Gastrocnemius medialis (tissue), 4 donors: ENCODE measurements at regions of chr21 and their contacts with region 1.

Region 1: GRCh38 chr21:37366482-37367316 is at the start of gene DYRK1A:
- DNase-seq: peak; percentile 99 to 100
- ATAC-seq: peak; percentile 78 to 82
- H3K4me3 ChIP-seq: peak within 1 kb of the TSS; percentile 83 to 97 (median 92)
- H3K27ac ChIP-seq: peak within 1 kb of the TSS; percentile 99 to 100 (median 100)
- H3K4me1 ChIP-seq: peaks cover 31 to 39% of the 10 kb centered on the region in 2 donors
- H3K27me3 ChIP-seq: no peaks in the 10 kb centered on the region
- CTCF ChIP-seq: peak in 1 of 5 experiments; percentile 16
- POLR2A ChIP-seq: peak; percentile 79 to 89
- total RNA-seq, gene DYRK1A: 81.0 to 115 (median 95.3) TPM

Region 2: DNA sequence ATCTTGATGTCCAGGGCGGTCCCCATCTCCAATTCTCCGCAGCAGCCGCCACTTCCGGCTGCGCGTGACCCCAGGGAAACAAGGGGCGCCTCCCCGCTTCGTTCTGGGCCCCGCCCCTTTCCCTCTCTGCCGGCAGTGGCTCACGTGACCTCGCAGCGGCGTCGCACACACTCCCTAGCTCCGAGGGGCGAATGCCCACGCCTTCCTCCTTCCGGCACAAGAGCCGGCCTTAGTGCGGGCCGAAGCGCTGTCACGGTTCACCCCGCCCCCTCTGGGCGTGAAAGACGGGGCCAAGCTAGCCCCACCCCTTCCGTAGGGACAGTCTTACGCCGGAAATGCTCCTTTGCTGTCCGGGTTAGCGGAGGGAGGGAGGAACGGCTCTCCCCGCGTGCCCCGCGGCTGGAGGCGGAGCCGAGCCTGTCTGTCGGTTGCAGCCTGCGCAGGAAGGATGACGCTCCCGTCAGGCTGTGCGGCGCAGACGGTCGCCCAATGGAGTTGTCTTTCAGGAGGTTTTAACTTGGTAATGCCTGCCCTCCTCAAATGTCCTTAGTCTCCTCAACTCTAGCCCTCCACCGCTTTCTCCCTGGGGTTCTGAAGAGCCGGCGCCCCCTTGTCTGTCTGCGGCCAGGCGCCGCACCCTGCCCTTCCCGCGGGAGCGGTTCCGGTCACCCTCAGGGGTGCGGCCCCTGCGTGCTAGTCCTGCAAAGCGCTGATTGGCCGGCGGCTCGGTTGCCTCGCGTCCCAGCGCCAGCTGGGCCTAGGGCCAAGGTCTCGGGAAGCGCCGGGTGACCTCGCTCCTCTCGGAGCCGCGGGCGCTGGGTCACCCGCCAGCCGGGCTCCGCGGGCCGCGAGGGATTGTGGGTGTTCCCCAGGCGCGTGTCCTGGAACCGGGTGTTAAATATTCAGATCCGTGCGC is 99.2 kb before region 1 on chr21 and contains the start of gene VPS26C:
- in situ Hi-C with region 1: loop called in 3 of 4 experiments (anchors 10 to 25 kb)
- intact Hi-C with region 1: loop called (anchors 1 kb)
- DNase-seq: peak; percentile 97 to 99
- ATAC-seq: peak; percentile 88 to 94
- H3K4me3 ChIP-seq: peak within 1 kb of the TSS; percentile 72 to 90 (median 84)
- H3K27ac ChIP-seq: peak within 1 kb of the TSS; percentile 89 to 97 (median 96)
- H3K4me1 ChIP-seq: peaks cover 37 to 41% of the 10 kb centered on the region in 2 donors
- H3K27me3 ChIP-seq: no peaks in the 10 kb centered on the region
- CTCF ChIP-seq: peak in 1 of 5 experiments; percentile 32
- POLR2A ChIP-seq: peak; percentile 88 to 92
- total RNA-seq, gene VPS26C: 57.6 to 82.7 (median 75.4) TPM

Region 3: GRCh38 chr21:37273911-37274690 is 92.6 kb before region 1 on chr21:
- in situ Hi-C with region 1: loop called in 3 of 4 experiments (anchors 10 to 25 kb)
- intact Hi-C with region 1: no loop called
- DNase-seq: no peak
- ATAC-seq: no peak
- H3K4me3 ChIP-seq: no peak overlapping the region
- H3K27ac ChIP-seq: no peak overlapping the region
- H3K4me1 ChIP-seq: no peaks in the 10 kb centered on the region
- H3K27me3 ChIP-seq: no peaks in the 10 kb centered on the region
- CTCF ChIP-seq: no peak
- POLR2A ChIP-seq: no peak

Region 4: DNA sequence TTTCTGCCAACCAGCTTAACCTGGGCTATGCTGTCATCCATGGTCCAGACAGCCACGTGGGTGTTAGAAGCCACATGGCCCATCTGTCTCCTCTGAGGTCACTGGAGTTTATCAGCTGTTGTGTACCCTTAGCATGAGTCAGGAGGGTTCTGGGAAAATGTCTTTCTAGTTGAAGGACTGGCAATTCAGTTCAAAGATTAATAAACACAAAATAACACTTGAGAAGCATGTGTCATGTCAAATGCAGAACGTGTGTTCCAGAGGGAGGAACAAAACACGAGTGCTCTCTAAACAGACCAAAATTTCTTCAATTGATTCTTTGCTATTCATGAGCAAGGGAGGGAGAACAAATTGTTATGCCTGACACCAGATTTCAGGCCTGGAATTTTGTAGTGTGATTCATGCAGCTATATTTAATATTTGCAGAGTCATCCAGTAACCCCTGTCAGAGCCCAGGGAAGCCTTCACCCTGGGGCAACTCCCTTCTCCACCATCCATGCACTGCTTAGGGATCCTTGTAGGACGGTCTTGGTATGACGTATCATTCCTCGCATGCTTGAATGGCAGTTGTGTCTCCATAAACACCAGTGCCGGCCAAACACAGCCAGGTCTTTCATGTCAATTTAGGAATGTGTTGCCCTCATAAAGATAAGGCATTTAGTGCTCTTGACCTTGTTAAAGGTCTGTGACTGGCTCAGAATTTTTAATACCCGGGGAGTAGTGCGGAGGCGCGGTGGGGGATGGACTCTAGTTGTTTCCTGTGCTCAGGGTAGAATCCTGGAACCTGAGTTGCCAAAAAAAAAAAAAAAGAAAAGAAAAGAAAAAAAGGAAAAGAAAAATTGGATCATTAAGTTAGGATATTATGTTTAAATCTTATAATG is 27.8 kb before region 1 on chr21:
- in situ Hi-C with region 1: no loop called
- intact Hi-C with region 1: loop called (anchors 1 kb)
- DNase-seq: peak; percentile 70 to 92
- ATAC-seq: peak; percentile 96 to 97
- H3K4me3 ChIP-seq: peak overlapping the region; percentile 17 to 40 (median 28)
- H3K27ac ChIP-seq: peak overlapping the region; percentile 85 to 92 (median 86)
- H3K4me1 ChIP-seq: peaks cover 10 to 21% of the 10 kb centered on the region in 2 donors
- H3K27me3 ChIP-seq: no peaks in the 10 kb centered on the region
- CTCF ChIP-seq: no peak
- POLR2A ChIP-seq: peak in 1 of 2 donors; percentile 12

Region 5: DNA sequence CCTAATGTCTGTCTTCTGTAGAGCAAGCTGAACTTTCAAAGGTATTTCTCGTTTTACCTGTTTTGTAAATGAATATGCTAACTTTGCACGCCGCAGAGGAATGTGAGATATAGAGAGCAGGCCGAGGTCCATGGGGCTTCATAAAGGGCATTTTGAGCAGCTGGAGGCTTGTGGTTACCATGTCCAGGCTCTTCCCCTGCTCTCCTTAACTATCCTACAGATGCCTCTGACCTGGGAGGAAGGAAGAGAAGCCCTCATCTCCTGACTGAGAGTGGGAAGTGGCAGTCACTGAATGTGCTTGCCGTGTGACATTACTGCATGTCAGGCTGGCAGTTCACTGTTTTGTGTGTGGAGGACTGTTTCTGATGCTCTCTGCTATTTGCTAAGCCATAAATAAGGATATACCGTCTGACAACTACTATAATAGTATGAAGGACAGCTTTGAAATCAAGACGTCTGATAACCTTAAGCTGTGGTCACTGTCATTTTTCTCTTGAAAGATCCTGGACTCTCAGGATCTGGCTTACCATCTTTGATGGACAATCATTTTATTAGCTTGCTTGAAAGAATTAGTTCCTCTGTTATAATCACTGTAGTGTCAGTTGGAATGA is 92.1 kb after region 1 on chr21:
- in situ Hi-C with region 1: no loop called
- intact Hi-C with region 1: loop called (anchors 5 kb)
- DNase-seq: no peak
- ATAC-seq: peak; percentile 8 to 51
- H3K4me3 ChIP-seq: peak overlapping the region in 2 of 4 donors; percentile 11 to 15
- H3K27ac ChIP-seq: peak overlapping the region; percentile 78 to 86 (median 80)
- H3K4me1 ChIP-seq: peaks cover 97 to 99% of the 10 kb centered on the region in 2 donors
- H3K27me3 ChIP-seq: no peaks in the 10 kb centered on the region
- CTCF ChIP-seq: no peak
- POLR2A ChIP-seq: no peak

Region 6: DNA sequence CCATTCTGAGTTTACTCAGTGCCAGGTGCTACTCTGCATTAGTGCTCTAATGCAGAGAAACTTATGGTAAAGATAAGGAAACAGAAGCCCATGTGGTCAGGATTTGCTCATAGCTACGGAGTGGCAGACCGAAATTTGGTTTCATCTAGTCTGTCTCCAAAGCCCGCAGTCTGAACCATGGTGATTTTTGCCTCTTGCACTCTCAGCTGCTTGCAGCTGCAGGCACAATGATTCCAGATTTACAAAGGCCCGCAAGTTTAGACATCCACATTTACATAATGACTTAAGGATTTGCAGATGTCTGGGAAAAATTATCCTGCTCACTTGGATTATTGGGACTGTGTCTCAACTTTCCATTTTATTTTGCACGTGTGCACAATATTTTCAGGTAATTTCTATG is 710.9 kb after region 1 on chr21:
- in situ Hi-C with region 1: no loop called
- intact Hi-C with region 1: no loop called
- DNase-seq: no peak
- ATAC-seq: no peak
- H3K4me3 ChIP-seq: no peak overlapping the region
- H3K27ac ChIP-seq: no peak overlapping the region
- H3K4me1 ChIP-seq: no peaks in the 10 kb centered on the region
- H3K27me3 ChIP-seq: no peaks in the 10 kb centered on the region
- CTCF ChIP-seq: no peak
- POLR2A ChIP-seq: no peak